ENCODE measurements at regions of chr3 and their contacts with region 1.

Region 1: DNA sequence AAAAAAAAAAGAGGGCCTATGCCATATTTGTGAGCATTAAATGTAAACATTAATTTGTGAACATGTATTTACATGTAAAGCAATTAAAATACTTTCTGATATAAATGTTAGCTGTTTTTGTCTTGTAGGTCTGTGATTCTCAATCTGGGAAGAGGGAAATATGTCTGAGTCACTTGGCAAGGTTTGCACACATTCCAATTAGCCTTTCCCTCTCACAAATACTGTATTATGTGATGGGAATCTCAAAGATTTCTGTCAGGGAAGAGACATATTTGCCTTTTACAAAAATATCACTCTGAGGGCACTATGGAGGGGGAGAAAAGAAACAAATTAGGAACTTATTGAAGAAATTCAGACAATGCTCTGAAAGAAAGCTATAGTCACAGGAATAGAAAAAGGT is 483.6 kb downstream of the GBE1 start:
- DNase-seq: no peak
- H3K4me3 ChIP-seq: no peak overlapping the region
- H3K4me3 Mint-ChIP-seq: no peak overlapping the region
- H3K27ac Mint-ChIP-seq: peak overlapping the region; percentile 65
- H3K4me1 ChIP-seq: peaks cover 34% of the 10 kb centered on the region
- H3K4me1 Mint-ChIP-seq: peaks cover 28% of the 10 kb centered on the region
- H3K27me3 ChIP-seq: no peaks in the 10 kb centered on the region
- H3K27me3 Mint-ChIP-seq: no peaks in the 10 kb centered on the region
- CTCF ChIP-seq: no peak

Region 2: GRCh38 chr3:81261996-81262395 is 15.9 kb before region 1 on chr3:
- CTCF ChIA-PET with region 1: no interaction called
- POLR2A ChIA-PET with region 1: interaction called, 5 read pairs
- intact Hi-C with region 1: loop called (anchors 2 kb)
- DNase-seq: no peak
- H3K4me3 ChIP-seq: no peak overlapping the region
- H3K4me3 Mint-ChIP-seq: peak overlapping the region; percentile 15
- H3K27ac Mint-ChIP-seq: no peak overlapping the region
- H3K4me1 ChIP-seq: peaks cover 34% of the 10 kb centered on the region
- H3K4me1 Mint-ChIP-seq: peaks cover 20% of the 10 kb centered on the region
- H3K27me3 ChIP-seq: no peaks in the 10 kb centered on the region
- H3K27me3 Mint-ChIP-seq: no peaks in the 10 kb centered on the region
- CTCF ChIP-seq: no peak

Measured in Caco-2 (cell line).